MCF 10A (cell line): ENCODE measurements at regions of chr3 and their contacts with region 1.

Region 1: DNA sequence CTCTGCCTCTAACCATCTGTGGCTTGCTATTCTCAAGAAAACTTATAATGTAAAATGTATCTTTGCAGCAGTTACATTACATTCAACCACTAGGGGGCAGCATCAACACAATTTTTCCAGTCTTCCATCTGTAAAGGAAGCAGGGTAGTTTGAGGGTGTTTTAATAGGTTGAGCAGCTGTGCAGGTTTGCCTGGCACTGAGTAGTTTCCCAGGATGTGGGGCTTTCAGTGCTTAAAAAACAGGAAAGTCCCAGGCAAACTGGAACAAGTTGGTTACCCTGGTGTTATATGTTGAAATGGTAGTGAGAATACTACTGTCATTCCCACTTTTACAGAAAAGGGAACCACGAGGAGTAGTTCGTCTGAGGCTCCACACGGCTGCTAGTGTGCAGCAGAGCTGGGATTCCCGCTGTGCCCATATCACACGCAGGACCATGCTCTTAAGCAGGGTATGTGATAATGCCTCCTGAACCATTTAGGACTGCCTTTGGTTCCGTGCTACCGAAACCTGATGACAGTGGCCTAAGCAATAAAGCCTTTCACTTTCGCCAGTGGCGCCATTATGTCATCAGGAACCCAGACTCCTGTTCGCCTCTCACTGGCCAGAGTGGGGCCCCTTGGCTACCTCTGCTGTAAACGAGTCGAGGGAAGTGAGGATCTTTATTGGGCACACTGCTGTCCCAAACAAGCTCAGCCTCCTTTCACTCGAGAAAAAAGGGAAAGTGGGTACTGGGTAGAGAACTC is 64.7 kb upstream of the ZBTB38 start:
- DNase-seq: peak; percentile 79
- H3K4me3 Mint-ChIP-seq: no peak overlapping the region
- H3K27ac Mint-ChIP-seq: no peak overlapping the region
- H3K4me1 Mint-ChIP-seq: peaks cover 9% of the 10 kb centered on the region
- H3K27me3 Mint-ChIP-seq: no peaks in the 10 kb centered on the region
- CTCF ChIP-seq: peak; percentile 62

Region 2: GRCh38 chr3:141231101-141231935 is 72.3 kb before region 1 on chr3 and contains the start of gene PXYLP1:
- CTCF ChIA-PET with region 1: interaction called, 44 read pairs
- POLR2A ChIA-PET with region 1: interaction called, 4 read pairs
- intact Hi-C with region 1: loop called (anchors 5 kb)
- DNase-seq: peak; percentile 81
- H3K4me3 Mint-ChIP-seq: peak within 1 kb of the TSS; percentile 72
- H3K27ac Mint-ChIP-seq: peak within 1 kb of the TSS; percentile 31
- H3K4me1 Mint-ChIP-seq: peaks cover 4% of the 10 kb centered on the region
- H3K27me3 Mint-ChIP-seq: no peaks in the 10 kb centered on the region
- CTCF ChIP-seq: peak; percentile 67
- total RNA-seq, gene PXYLP1: 2.1 and 5.4 TPM in 2 replicates

Region 3: DNA sequence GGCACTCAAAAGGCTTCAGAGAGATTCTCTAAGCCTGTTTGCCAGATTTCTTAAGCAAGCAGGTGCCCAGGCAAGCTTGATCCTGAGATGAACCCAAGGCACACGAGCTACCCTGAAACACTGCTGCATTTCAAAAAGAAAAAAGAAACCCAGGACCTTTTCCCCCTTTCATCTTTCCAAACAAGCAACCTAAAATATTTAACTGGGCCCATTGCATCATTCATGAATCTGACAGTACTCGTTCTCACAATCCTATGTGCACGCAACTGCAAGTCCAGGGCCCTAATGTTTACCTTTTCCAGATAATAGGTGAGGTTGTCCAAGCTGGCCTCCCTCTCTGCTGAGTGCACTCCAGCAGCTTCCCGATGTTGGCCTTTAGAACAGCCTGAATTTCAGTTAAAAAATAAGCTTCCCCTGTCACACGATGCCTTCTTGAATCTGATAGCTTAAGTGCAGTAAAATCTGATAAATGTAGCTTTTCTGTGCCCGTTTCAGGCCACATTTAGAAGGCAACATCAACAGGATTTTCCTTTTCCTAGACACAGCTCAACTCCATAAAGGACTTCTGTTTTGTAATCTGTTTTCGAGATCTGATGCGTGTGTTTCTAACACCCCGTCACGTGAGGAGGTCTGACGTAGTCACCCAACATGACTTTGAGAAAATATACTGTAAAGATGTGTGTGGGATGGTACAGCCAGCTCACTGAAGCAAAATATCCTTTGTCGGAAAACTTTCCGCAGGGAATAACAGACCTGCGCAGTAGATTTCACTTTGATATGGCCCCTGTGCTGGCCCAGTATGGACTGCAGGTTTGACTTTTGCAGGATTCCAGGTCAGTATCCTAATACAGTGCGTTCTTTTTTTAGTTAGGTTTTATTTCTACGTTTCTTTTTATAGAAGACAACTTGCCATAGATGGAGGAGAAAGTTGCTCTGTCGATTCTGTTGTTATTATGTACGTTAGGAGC is 128.0 kb after region 1 on chr3:
- CTCF ChIA-PET with region 1: interaction called, 11 read pairs
- POLR2A ChIA-PET with region 1: no interaction called
- intact Hi-C with region 1: no loop called
- DNase-seq: no peak
- H3K4me3 Mint-ChIP-seq: no peak overlapping the region
- H3K27ac Mint-ChIP-seq: no peak overlapping the region
- H3K4me1 Mint-ChIP-seq: peaks cover 2% of the 10 kb centered on the region
- H3K27me3 Mint-ChIP-seq: no peaks in the 10 kb centered on the region
- CTCF ChIP-seq: no peak

Region 4: GRCh38 chr3:141452036-141452435 is 148.4 kb after region 1 on chr3:
- CTCF ChIA-PET with region 1: interaction called, 392 read pairs
- POLR2A ChIA-PET with region 1: interaction called, 12 read pairs
- intact Hi-C with region 1: loop called (anchors 1 kb)
- DNase-seq: peak; percentile 56
- H3K4me3 Mint-ChIP-seq: no peak overlapping the region
- H3K27ac Mint-ChIP-seq: no peak overlapping the region
- H3K4me1 Mint-ChIP-seq: peaks cover 26% of the 10 kb centered on the region
- H3K27me3 Mint-ChIP-seq: no peaks in the 10 kb centered on the region
- CTCF ChIP-seq: peak; percentile 50

Region 5: GRCh38 chr3:141561426-141562034 is 257.9 kb after region 1 on chr3:
- CTCF ChIA-PET with region 1: interaction called, 8 read pairs
- POLR2A ChIA-PET with region 1: no interaction called
- intact Hi-C with region 1: loop called (anchors 2 kb)
- DNase-seq: peak; percentile 64
- H3K4me3 Mint-ChIP-seq: no peak overlapping the region
- H3K27ac Mint-ChIP-seq: no peak overlapping the region
- H3K4me1 Mint-ChIP-seq: no peaks in the 10 kb centered on the region
- H3K27me3 Mint-ChIP-seq: no peaks in the 10 kb centered on the region
- CTCF ChIP-seq: peak; percentile 88